Activated T-helper 2 cell treated with anti-CD3 and anti-CD28 coated beads, Interferon-gamma antibody, Interleukin-2, Interleukin-4, amounts not matched to agents 10 μg/mL and 5 μg/mL and 100 μg/mL, durations not matched to agents 14 hours and 24 hours and 36 hours (primary cell): ENCODE measurements at regions of chr4 and their contacts with region 1.

Region 1: GRCh38 chr4:48779998-48780742 is at the start of gene FRYL:
- DNase-seq: peak; percentile 98
- H3K4me3 Mint-ChIP-seq: peak within 1 kb of the TSS; percentile 95
- H3K27ac Mint-ChIP-seq: peak within 1 kb of the TSS; percentile 97
- H3K4me1 Mint-ChIP-seq: peaks cover 35% of the 10 kb centered on the region
- H3K27me3 Mint-ChIP-seq: no peaks in the 10 kb centered on the region
- total RNA-seq, gene FRYL: 68.2 and 69.6 TPM in 2 replicates

Region 2: DNA sequence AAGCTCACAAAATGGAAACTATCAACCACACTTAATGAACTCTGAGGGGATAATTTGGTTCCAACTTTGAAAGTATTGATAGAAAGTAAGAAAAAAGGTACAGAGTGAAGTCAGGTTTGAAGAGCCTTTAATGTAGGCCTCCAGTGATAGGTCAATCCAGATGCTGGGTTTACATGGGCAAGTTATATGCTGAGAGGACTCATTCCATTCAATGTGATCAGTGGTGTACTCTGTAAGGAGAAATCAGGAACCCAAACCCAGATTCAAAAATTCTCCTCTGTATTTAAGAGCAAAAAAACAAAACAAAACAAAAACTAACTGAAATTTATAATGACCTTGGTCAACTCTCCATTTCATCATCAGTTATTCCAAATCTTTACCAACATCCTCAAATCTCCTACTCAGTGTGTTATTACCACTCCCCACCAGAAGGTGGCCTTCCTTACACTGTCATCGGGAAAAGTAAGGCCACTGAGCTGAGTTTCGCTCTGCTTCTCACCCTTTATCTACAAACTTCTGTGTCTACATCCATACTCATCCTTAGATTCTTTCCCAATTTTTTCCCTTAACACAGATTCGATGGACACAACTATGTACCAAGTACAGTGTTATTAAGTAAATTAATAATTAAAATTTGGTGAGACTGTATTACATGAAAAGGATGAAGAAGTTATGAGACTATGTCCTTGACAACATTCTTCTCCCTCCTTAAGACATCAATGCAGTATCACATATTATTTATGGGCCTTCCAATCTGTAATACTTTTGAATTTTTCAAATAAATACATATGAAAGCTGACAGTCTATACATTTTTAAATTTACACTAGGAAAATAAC is 201.8 kb before region 1 on chr4:
- intact Hi-C with region 1: loop called (anchors 2 kb)
- DNase-seq: peak; percentile 14
- H3K4me3 Mint-ChIP-seq: no peak overlapping the region
- H3K27ac Mint-ChIP-seq: no peak overlapping the region
- H3K4me1 Mint-ChIP-seq: no peaks in the 10 kb centered on the region
- H3K27me3 Mint-ChIP-seq: no peaks in the 10 kb centered on the region

Region 3: GRCh38 chr4:48688953-48689352 is 91.2 kb before region 1 on chr4:
- intact Hi-C with region 1: loop called (anchors 1 kb)
- DNase-seq: no peak
- H3K4me3 Mint-ChIP-seq: no peak overlapping the region
- H3K27ac Mint-ChIP-seq: no peak overlapping the region
- H3K4me1 Mint-ChIP-seq: peaks cover 6% of the 10 kb centered on the region
- H3K27me3 Mint-ChIP-seq: no peaks in the 10 kb centered on the region

Region 4: DNA sequence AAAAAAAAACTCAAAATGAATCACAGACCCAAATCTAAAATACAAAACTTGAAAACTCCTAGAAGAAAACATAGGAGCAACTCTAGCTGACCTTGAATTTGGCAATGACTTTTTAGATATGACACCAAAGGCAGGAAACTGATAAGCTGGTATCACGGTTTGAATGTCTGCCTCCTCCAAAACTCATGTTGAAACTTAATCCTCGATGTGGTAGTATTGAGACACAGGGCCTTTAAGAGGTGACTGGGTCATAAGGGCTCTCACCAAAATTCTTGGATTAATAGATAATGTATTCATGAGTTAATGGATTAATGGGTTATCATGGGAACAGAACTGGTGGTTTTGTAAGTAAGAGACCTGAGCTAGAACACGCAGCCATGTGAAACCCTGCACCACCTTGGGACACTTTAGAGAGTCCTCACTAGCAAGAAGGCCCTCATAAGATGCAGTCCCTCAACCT is 40.6 kb before region 1 on chr4:
- intact Hi-C with region 1: loop called (anchors 1 kb)
- DNase-seq: no peak
- H3K4me3 Mint-ChIP-seq: no peak overlapping the region
- H3K27ac Mint-ChIP-seq: peak overlapping the region; percentile 62
- H3K4me1 Mint-ChIP-seq: peaks cover 54% of the 10 kb centered on the region
- H3K27me3 Mint-ChIP-seq: no peaks in the 10 kb centered on the region

Region 5: GRCh38 chr4:48906206-48907173 is 126.3 kb after region 1 on chr4 and contains the start of gene OCIAD2:
- intact Hi-C with region 1: loop called (anchors 2 kb)
- DNase-seq: peak; percentile 71
- H3K4me3 Mint-ChIP-seq: peak within 1 kb of the TSS; percentile 89
- H3K27ac Mint-ChIP-seq: peak within 1 kb of the TSS; percentile 81
- H3K4me1 Mint-ChIP-seq: peaks cover 26% of the 10 kb centered on the region
- H3K27me3 Mint-ChIP-seq: no peaks in the 10 kb centered on the region
- total RNA-seq, gene OCIAD2: 53.5 and 63.0 TPM in 2 replicates